HepG2 (cell line): ENCODE measurements at regions of chr2 and their contacts with region 1.

Region 1: DNA sequence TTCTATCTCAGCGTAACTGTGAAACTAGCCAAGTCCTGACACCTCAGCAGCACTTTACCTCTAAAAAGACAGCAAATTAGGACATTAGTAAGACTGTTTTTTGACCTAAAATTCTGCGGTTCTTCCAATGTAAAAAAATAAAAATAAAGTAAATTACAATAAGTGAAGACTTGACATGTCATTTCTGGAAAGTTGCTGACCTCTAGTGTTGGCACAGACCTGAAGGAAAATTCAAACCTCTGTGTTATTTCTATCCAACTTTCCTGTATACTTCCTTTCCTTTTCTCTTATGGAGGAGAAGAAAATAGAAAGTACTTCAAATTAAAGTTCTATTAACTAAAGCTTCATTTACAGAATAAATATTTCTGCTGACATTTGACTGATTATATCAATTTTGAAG is 110.6 kb downstream of the TMEM182 start:
- DNase-seq: peak; percentile 15
- ATAC-seq: no peak
- H3K4me3 ChIP-seq: no peak overlapping the region
- H3K27ac ChIP-seq: no peak overlapping the region
- H3K4me1 ChIP-seq: no peaks in the 10 kb centered on the region
- H3K27me3 ChIP-seq: no peaks in the 10 kb centered on the region
- CTCF ChIP-seq: peak; percentile 42; the same call in 1 of the 2 replicates
- EP300 ChIP-seq: no peak
- POLR2A ChIP-seq: no peak
- RAD21 ChIP-seq: no peak

Region 2: DNA sequence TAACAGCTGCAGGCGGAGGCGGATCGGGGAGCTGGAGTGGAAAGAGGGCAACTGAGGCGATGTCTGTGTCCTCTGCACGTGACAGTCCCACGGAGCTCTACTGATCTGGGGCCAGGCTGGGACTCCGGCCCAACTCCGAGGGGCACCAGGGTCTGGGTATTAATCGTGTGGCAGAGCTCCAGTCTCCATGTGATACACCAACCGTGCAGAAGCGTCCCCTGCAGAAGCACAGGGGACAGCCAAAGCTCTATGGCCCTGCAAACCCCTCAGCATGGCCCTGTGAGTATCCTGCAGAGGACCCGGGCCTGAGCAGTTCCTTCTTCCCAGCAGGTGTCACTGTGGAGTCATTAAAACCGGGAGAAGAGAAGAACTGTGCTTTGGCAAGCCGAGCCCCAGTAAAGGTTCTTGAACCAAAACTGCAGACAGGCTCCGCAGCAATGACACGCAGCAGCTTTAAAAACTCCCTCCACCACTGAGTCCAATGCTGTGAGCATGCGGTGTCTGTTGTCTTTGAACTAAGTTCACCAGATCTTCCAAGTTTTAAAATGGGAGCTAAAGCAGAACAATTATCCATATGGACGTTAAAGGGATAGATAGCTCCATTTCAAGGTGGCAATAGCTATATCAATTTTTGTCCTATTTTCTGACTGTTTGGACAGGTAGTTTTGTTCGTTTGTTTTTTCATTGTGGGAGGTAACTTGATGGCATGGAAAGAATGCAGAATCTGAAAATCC is 31.1 kb before region 1 on chr2:
- CTCF ChIA-PET with region 1: interaction called, 27 read pairs
- POLR2A ChIA-PET with region 1: no interaction called
- in situ Hi-C with region 1: no loop called
- intact Hi-C with region 1: loop called (anchors 1 kb)
- DNase-seq: peak; percentile 56
- ATAC-seq: peak; percentile 96
- H3K4me3 ChIP-seq: no peak overlapping the region
- H3K27ac ChIP-seq: no peak overlapping the region
- H3K4me1 ChIP-seq: no peaks in the 10 kb centered on the region
- H3K27me3 ChIP-seq: no peaks in the 10 kb centered on the region
- CTCF ChIP-seq: peak; percentile 75
- EP300 ChIP-seq: no peak
- POLR2A ChIP-seq: no peak
- RAD21 ChIP-seq: 0 out of 2 replicates have a peak, but pooled peaks have one; percentile 21

Region 3: DNA sequence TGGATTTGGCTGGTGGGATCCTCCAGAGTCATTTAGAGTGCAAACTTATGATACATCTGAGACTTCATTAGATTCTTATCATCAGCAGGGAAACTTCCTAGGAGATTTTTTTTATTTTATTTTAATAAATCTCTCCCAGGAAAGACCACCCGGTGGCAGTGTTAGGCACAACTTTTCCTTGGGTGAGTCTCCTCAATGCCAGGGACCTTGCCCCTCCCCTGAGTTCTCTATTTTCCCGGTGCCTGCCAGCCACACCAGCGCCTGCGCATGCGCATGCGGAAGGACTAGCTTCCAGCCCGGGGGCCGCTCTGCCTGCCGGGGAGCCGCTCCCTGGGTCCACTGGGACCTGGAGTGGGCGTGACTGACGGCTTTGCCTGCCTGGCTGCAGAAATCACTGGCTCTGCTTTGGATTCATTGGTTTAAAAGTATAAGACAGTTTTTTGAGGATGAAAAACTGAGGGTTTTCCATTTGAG is 24.0 kb before region 1 on chr2:
- CTCF ChIA-PET with region 1: no interaction called
- POLR2A ChIA-PET with region 1: no interaction called
- in situ Hi-C with region 1: no loop called
- intact Hi-C with region 1: loop called (anchors 2 kb)
- DNase-seq: peak; percentile 85
- ATAC-seq: peak; percentile 99
- H3K4me3 ChIP-seq: peak overlapping the region in 1 of 3 experiments; percentile 12; a peak in 2 of 6 replicates
- H3K27ac ChIP-seq: no peak overlapping the region
- H3K4me1 ChIP-seq: peaks cover 7% of the 10 kb centered on the region
- H3K27me3 ChIP-seq: no peaks in the 10 kb centered on the region
- CTCF ChIP-seq: peak; percentile 22; the same call in 1 of the 2 replicates
- EP300 ChIP-seq: no peak
- POLR2A ChIP-seq: no peak
- RAD21 ChIP-seq: no peak

Region 4: GRCh38 chr2:102886216-102886893 is 14.0 kb after region 1 on chr2:
- CTCF ChIA-PET with region 1: no interaction called
- POLR2A ChIA-PET with region 1: no interaction called
- in situ Hi-C with region 1: no loop called
- intact Hi-C with region 1: no loop called
- DNase-seq: no peak
- ATAC-seq: peak; percentile 48; the same call in 2 of the 3 replicates
- H3K4me3 ChIP-seq: no peak overlapping the region
- H3K27ac ChIP-seq: no peak overlapping the region
- H3K4me1 ChIP-seq: no peaks in the 10 kb centered on the region
- H3K27me3 ChIP-seq: peaks cover 0 to 3% of the 10 kb centered on the region in 2 experiments; a peak in 1 of 5 replicates
- CTCF ChIP-seq: no peak
- EP300 ChIP-seq: no peak
- POLR2A ChIP-seq: no peak
- RAD21 ChIP-seq: no peak